ENCODE measurements at regions of chr4 and their contacts with region 1.

Region 1: GRCh38 chr4:7843831-7844593 is 95.6 kb downstream of the AFAP1 start:
- DNase-seq: peak; percentile 86
- ATAC-seq: peak; percentile 52

Region 2: GRCh38 chr4:7721984-7722551 is 121.9 kb before region 1 on chr4:
- intact Hi-C with region 1: no loop called
- DNase-seq: no peak
- ATAC-seq: no peak

Region 3: GRCh38 chr4:7939377-7940108 is 95.5 kb after region 1 on chr4 and contains the start of gene AFAP1:
- intact Hi-C with region 1: loop called (anchors 10 kb)
- DNase-seq: peak; percentile 93
- ATAC-seq: peak; percentile 98
- total RNA-seq, gene AFAP1: 6.2 TPM